MCF 10A (cell line): ENCODE measurements at regions of chr7 and their contacts with region 1.

Region 1: GRCh38 chr7:142782922-142783900 is 12.4 kb downstream of the PRSS2 start:
- DNase-seq: peak; percentile 88
- H3K4me3 Mint-ChIP-seq: peak overlapping the region; percentile 64
- H3K27ac Mint-ChIP-seq: no peak overlapping the region
- H3K4me1 Mint-ChIP-seq: no peaks in the 10 kb centered on the region
- H3K27me3 Mint-ChIP-seq: peaks cover 6% of the 10 kb centered on the region
- CTCF ChIP-seq: peak; percentile 94

Region 2: DNA sequence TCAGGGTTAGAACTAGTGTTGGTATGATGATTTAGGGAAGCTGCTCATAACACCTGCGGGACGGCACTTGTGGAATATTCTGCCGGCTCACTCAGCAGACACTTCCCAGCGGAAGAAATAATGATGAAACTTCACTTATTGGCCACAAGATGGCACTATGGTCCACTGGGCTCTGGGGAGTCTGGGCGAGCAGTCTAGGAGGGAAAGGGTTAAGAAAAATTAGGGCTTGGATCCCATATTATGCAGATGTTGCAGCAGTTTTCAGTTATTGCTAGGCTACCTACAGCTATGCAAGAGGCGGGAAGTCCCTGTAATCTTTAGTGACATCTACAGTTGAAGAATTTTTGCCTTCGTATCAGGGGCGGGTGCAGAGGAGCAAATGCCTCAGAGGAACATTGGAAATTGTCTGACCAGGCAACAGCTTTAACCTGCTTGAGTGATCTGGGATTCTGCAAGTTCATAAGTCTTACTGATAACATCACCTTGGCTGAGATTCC is 286.6 kb before region 1 on chr7:
- CTCF ChIA-PET with region 1: interaction called, 25 read pairs
- POLR2A ChIA-PET with region 1: no interaction called
- intact Hi-C with region 1: no loop called
- DNase-seq: peak; percentile 63
- H3K4me3 Mint-ChIP-seq: no peak overlapping the region
- H3K27ac Mint-ChIP-seq: no peak overlapping the region
- H3K4me1 Mint-ChIP-seq: peaks cover 26% of the 10 kb centered on the region
- H3K27me3 Mint-ChIP-seq: peaks cover 28% of the 10 kb centered on the region
- CTCF ChIP-seq: peak; percentile 81

Region 3: DNA sequence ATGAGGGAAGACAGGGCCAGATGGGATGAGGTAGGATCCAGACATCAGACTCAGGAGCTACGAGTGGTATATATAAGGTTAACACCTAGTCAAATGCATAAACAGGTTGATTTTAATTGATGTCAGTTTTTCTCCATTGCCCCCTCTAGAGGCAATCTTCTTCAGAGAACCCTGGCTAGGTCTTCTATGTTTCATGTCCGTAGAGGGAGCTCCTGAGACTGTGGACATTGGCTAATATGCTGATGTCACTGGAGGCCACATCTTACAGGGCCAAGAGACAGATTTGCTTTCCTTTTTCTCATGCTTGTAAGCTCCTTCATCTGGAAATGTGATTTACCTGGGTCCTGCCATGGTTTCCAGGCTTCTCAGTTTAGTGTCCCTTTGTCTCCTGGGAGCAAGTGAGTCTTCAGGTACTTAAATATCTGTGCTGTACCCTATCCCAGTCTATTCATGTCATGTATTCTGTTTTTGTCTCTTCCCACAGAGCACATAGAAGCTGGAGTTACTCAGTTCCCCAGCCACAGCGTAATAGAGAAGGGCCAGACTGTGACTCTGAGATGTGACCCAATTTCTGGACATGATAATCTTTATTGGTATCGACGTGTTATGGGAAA is 195.5 kb before region 1 on chr7:
- CTCF ChIA-PET with region 1: interaction called, 19 read pairs
- POLR2A ChIA-PET with region 1: no interaction called
- intact Hi-C with region 1: no loop called
- DNase-seq: peak; percentile 85
- H3K4me3 Mint-ChIP-seq: no peak overlapping the region
- H3K27ac Mint-ChIP-seq: no peak overlapping the region
- H3K4me1 Mint-ChIP-seq: peaks cover 6% of the 10 kb centered on the region
- H3K27me3 Mint-ChIP-seq: no peaks in the 10 kb centered on the region
- CTCF ChIP-seq: peak; percentile 63

Region 4: DNA sequence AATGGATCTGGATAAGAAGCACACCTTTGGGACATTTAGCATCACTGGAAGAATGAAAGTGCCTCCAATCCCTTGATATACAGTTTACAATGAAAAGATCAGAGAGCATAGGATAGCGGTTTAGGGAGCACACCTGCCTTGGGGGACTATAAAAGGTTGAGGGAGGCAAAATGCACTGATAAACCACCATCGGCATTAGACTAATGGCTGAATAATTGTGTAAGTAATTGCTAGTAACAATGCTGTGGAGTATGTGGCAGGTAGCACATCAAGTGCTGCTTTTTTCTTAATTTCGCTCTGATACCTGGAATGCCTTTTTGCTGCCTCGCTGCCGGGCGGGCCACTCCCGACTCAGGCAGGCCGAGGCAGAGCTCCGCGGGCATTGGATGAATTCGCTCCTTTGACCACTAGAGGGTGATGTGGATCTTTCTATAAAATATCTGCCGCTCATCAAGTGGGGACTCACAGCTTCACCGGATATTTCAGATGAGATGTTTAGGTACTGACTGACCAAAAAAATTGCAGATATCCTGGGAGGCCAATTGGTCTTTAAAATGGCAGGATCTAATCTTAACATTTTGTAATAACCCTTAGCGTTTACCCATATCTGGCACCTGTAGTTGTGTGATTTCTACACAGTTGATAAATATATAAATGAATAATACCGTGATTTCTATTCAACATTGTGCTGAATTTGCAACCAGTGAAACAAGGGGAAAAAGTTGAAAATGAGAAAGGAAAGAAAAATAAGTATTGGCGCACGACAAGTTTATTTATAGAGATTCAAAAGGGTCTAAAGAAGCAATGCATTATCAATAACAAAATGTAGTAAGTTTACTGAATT is 150.7 kb before region 1 on chr7:
- CTCF ChIA-PET with region 1: interaction called, 150 read pairs
- POLR2A ChIA-PET with region 1: interaction called, 3 read pairs
- intact Hi-C with region 1: loop called (anchors 1 kb)
- DNase-seq: peak; percentile 75
- H3K4me3 Mint-ChIP-seq: no peak overlapping the region
- H3K27ac Mint-ChIP-seq: no peak overlapping the region
- H3K4me1 Mint-ChIP-seq: peaks cover 11% of the 10 kb centered on the region
- H3K27me3 Mint-ChIP-seq: peaks cover 14% of the 10 kb centered on the region
- CTCF ChIP-seq: peak; percentile 61

Region 5: DNA sequence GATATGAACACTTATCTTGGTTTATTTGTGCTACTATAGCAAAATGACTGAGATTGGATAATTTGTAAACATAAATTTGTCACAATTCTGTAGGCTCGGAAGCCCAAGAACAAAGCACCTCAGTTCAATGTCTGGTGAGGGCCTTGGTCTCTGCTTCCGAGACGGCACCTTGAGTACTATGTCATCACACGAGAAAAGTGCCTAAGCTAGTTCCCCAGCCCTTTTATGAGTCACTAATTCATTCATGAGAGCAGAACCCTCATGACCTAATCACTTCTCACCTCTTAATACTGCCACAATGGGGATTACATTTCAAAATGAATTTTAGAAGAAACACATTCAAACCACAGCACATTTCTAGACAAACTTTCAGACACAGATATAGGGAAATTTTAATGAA is 85.9 kb before region 1 on chr7:
- CTCF ChIA-PET with region 1: interaction called, 11 read pairs
- POLR2A ChIA-PET with region 1: no interaction called
- intact Hi-C with region 1: no loop called
- DNase-seq: no peak
- H3K4me3 Mint-ChIP-seq: no peak overlapping the region
- H3K27ac Mint-ChIP-seq: no peak overlapping the region
- H3K4me1 Mint-ChIP-seq: no peaks in the 10 kb centered on the region
- H3K27me3 Mint-ChIP-seq: peaks cover 63% of the 10 kb centered on the region
- CTCF ChIP-seq: no peak

Region 6: DNA sequence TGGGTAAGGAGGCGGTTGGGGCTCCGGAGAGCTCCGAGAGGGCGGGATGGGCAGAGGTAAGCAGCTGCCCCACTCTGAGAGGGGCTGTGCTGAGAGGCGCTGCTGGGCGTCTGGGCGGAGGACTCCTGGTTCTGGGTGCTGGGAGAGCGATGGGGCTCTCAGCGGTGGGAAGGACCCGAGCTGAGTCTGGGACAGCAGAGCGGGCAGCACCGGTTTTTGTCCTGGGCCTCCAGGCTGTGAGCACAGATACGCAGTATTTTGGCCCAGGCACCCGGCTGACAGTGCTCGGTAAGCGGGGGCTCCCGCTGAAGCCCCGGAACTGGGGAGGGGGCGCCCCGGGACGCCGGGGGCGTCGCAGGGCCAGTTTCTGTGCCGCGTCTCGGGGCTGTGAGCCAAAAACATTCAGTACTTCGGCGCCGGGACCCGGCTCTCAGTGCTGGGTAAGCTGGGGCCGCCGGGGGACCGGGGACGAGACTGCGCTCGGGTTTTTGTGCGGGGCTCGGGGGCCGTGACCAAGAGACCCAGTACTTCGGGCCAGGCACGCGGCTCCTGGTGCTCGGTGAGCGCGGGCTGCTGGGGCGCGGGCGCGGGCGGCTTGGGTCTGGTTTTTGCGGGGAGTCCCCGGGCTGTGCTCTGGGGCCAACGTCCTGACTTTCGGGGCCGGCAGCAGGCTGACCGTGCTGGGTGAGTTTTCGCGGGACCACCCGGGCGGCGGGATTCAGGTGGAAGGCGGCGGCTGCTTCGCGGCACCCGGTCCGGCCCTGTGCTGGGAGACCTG is 13.6 kb after region 1 on chr7:
- CTCF ChIA-PET with region 1: interaction called, 17 read pairs
- POLR2A ChIA-PET with region 1: no interaction called
- intact Hi-C with region 1: no loop called
- DNase-seq: no peak
- H3K4me3 Mint-ChIP-seq: no peak overlapping the region
- H3K27ac Mint-ChIP-seq: no peak overlapping the region
- H3K4me1 Mint-ChIP-seq: peaks cover 11% of the 10 kb centered on the region
- H3K27me3 Mint-ChIP-seq: peaks cover 77% of the 10 kb centered on the region
- CTCF ChIP-seq: no peak